ENCODE measurements at regions of chr2 and their contacts with region 1.

Region 1: GRCh38 chr2:102258386-102259074 is 52.8 kb upstream of the IL1RL1 start:
- DNase-seq: no peak
- H3K4me3 ChIP-seq: no peak overlapping the region
- H3K4me3 Mint-ChIP-seq: peak overlapping the region in 5 of 7 donors; percentile 17 to 79 (median 74)
- H3K27ac ChIP-seq: no peak overlapping the region
- H3K27ac Mint-ChIP-seq: peak overlapping the region; percentile 57 to 95 (median 84)
- H3K4me1 ChIP-seq: peaks cover 41% of the 10 kb centered on the region
- H3K4me1 Mint-ChIP-seq: peaks cover 45 to 49% (median 47%) of the 10 kb centered on the region in 3 donors
- H3K27me3 ChIP-seq: no peaks in the 10 kb centered on the region
- H3K27me3 Mint-ChIP-seq: no peaks in the 10 kb centered on the region

Region 2: GRCh38 chr2:102103992-102104871 is 154.3 kb before region 1 on chr2:
- CTCF ChIA-PET with region 1: no interaction called
- POLR2A ChIA-PET with region 1: no interaction called
- DNase-seq: peak in 1 of 5 donors; percentile 20
- H3K4me3 ChIP-seq: peak overlapping the region; percentile 37
- H3K4me3 Mint-ChIP-seq: peak overlapping the region; percentile 52 to 89 (median 78)
- H3K27ac ChIP-seq: no peak overlapping the region
- H3K27ac Mint-ChIP-seq: peak overlapping the region in 3 of 8 donors; percentile 18 to 64 (median 44)
- H3K4me1 ChIP-seq: no peaks in the 10 kb centered on the region
- H3K4me1 Mint-ChIP-seq: peaks cover 8 to 18% (median 12%) of the 10 kb centered on the region in 3 donors
- H3K27me3 ChIP-seq: no peaks in the 10 kb centered on the region
- H3K27me3 Mint-ChIP-seq: peaks cover 9 to 12% of the 10 kb centered on the region in 2 donors

Region 3: DNA sequence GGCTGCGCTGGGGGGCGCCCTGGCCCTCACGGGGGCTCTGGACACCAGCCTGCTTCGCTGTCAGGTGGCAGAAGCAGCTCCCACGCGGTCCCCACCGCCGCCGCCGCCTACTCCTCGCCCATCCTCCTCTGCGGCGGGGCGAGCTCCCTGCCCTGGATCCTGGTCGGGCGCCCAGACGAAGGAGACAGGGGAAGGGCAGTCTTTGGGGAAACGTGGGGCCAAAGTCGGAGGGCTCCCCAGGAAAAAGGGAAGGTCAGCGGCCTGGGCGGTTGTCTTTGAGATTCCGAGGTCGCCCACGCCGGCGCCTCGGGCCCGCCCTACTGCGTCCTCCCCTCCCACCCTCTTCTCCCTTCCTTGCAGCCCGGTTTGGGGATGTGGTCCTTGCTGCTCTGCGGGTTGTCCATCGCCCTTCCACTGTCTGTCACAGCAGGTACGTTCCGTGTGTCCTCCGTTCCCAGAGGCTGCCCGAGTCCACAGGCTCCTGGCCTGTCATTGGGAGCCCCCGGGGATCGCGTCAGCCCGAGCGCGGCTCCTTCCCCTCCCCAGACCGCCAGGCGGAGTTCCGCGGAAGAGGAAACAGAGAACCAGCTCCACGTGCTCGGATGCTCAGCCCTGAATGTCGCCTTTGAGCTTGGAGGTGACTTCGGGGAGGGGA is 70.9 kb before region 1 on chr2:
- CTCF ChIA-PET with region 1: no interaction called
- POLR2A ChIA-PET with region 1: no interaction called
- DNase-seq: peak; percentile 7 to 58 (median 11)
- H3K4me3 ChIP-seq: peak overlapping the region; percentile 42
- H3K4me3 Mint-ChIP-seq: peak overlapping the region; percentile 76 to 90 (median 81)
- H3K27ac ChIP-seq: no peak overlapping the region
- H3K27ac Mint-ChIP-seq: peak overlapping the region in 2 of 8 donors; percentile 56 to 88
- H3K4me1 ChIP-seq: no peaks in the 10 kb centered on the region
- H3K4me1 Mint-ChIP-seq: peaks cover 4 to 14% (median 4%) of the 10 kb centered on the region in 3 donors
- H3K27me3 ChIP-seq: no peaks in the 10 kb centered on the region
- H3K27me3 Mint-ChIP-seq: peaks cover 21 to 39% of the 10 kb centered on the region in 2 donors

Region 4: GRCh38 chr2:102217032-102217431 is 41.5 kb before region 1 on chr2:
- CTCF ChIA-PET with region 1: no interaction called
- POLR2A ChIA-PET with region 1: no interaction called
- DNase-seq: no peak
- H3K4me3 ChIP-seq: no peak overlapping the region
- H3K4me3 Mint-ChIP-seq: no peak overlapping the region
- H3K27ac ChIP-seq: no peak overlapping the region
- H3K27ac Mint-ChIP-seq: no peak overlapping the region
- H3K4me1 ChIP-seq: no peaks in the 10 kb centered on the region
- H3K4me1 Mint-ChIP-seq: peaks cover 16 to 19% (median 18%) of the 10 kb centered on the region in 3 donors
- H3K27me3 ChIP-seq: no peaks in the 10 kb centered on the region
- H3K27me3 Mint-ChIP-seq: peaks cover 0 to 3% of the 10 kb centered on the region in 2 donors

Region 5: DNA sequence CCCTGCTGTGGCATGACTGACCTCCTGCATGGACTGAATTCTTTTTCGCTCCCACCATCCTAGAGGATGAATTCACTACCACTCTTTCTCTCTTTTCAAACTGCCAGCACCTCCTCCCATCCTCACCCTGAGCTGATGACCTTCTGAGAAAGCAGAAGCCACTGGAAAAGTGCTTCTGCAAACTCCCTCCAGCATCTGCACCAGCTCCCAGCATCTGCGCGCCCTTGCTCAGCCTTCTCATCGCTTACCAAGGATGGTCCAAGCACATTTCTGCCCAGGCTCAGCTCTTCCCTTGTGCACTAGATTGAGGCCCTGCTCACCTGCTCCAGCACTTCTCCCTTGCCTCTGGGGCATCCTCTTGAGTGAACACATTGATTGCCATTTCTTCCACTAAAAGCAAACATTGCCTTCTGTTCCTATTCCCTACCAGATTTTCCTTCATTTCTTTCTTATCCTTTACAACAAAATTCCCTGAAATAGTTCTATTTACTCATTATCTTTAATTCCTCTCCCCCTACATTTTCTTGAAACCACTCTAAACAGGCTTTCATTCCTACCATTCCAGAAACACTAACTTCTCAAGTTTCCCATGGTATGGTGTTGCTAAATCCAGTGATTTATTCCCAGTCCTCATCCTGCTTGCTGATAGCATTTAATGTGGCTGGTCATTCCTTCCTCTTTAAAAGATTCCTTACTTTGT is 10.1 kb after region 1 on chr2:
- CTCF ChIA-PET with region 1: no interaction called
- POLR2A ChIA-PET with region 1: interaction called, 17 read pairs
- DNase-seq: no peak
- H3K4me3 ChIP-seq: no peak overlapping the region
- H3K4me3 Mint-ChIP-seq: no peak overlapping the region
- H3K27ac ChIP-seq: no peak overlapping the region
- H3K27ac Mint-ChIP-seq: no peak overlapping the region
- H3K4me1 ChIP-seq: no peaks in the 10 kb centered on the region
- H3K4me1 Mint-ChIP-seq: peaks cover 9 to 32% (median 25%) of the 10 kb centered on the region in 3 donors
- H3K27me3 ChIP-seq: no peaks in the 10 kb centered on the region
- H3K27me3 Mint-ChIP-seq: peaks cover 1 to 16% of the 10 kb centered on the region in 2 donors